Heart right ventricle (tissue), 16 donors: ENCODE measurements at regions of chr5 and their contacts with region 1.

Region 1: DNA sequence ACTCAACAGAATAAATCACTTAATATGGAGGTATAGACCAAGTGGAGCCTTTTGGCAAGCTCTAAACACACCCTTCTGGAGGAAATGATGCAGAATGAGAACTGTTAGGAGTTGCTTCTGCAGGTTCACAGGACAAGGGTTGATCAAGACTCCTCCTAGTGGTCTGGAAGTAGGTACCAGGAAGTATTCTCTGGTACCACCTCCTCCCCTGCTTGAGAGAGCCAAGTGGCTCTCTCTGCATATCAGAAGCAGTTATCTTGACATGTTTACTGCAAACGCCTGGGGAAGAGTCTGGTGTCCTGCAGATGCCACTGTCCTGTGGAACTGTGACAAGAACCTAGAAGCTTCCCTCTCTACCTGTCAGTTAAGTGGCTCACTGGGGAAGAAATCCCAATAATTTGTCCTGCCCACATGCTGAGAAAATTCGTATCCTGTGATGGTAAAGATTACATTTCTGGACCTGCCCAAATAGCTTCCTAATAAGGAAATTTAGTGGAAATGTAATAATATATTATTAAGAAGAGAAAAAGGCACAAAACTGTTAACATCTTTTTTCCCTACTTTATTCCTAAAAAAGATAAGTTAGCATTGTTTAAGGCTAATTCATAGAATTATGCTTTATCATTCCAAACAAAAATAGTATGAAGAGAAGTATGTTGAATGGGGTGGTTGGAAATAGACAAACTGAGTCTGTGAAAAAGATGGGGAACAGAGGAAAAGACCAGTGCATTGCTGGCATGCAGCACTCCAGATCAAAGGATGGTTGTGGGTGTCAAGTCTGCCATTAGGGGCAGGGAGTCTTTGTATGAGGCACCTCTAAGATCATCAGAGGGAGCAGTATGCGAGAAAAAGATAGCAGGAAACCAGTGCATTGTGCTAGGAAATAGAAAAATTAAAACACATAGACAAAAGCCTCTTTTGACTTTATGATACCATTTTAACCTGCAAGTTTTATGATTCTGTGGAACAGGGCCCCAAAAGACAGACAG is 118.8 kb downstream of the CDC42SE2 start:
- DNase-seq: no peak
- ATAC-seq: peak in 7 of 8 donors; percentile 34 to 70 (median 49)
- H3K4me3 ChIP-seq: no peak overlapping the region
- H3K27ac ChIP-seq: peak overlapping the region in 1 of 10 donors; percentile 92
- H3K4me1 ChIP-seq: peaks cover 0 to 86% (median 12%) of the 10 kb centered on the region in 9 donors
- H3K27me3 ChIP-seq: no peaks in the 10 kb centered on the region
- CTCF ChIP-seq: peak in 6 of 9 donors; percentile 30 to 60 (median 42)

Region 2: DNA sequence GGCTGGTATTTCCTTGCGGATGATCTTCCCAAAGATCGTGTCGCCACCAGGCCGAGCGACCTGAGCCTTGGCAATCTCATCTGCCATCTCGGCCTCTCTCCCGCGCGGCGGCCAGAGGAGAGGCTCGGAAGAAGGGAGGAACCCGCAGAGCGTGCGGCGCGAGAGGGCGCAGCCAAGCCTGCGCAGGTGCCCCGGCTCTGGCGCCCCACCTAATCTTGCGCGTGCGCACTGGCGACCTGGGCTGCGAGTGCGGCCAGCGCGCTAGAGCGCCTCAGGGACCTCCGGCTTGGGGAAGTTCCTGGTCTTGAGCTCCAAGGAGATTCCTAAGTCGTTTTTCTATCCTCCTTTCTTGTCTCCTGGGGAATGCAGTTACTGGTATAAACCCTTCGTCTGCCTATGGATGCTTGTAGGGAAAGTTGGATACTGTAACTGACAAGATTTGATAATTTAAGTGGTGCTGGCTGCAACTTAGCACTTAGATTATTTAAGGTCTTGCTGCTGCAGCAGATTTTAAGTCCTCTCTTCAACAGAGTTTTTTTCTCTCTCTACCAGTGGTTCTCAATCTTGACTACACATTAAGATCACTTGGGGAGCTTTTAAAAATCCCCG is 217.5 kb before region 1 on chr5 and contains the start of gene HINT1:
- intact Hi-C with region 1: loop called in 2 of 10 experiments (anchors 10 kb)
- DNase-seq: peak; percentile 89 to 94
- ATAC-seq: peak; percentile 95 to 99 (median 98)
- H3K4me3 ChIP-seq: peak within 1 kb of the TSS; percentile 73 to 95 (median 82)
- H3K27ac ChIP-seq: peak within 1 kb of the TSS; percentile 85 to 98 (median 92)
- H3K4me1 ChIP-seq: peaks cover 0 to 30% (median 21%) of the 10 kb centered on the region in 9 donors
- H3K27me3 ChIP-seq: no peaks in the 10 kb centered on the region
- CTCF ChIP-seq: peak in 3 of 9 donors; percentile 8 to 24 (median 15)
- total RNA-seq, gene HINT1: 113 to 190 (median 130) TPM

Region 3: DNA sequence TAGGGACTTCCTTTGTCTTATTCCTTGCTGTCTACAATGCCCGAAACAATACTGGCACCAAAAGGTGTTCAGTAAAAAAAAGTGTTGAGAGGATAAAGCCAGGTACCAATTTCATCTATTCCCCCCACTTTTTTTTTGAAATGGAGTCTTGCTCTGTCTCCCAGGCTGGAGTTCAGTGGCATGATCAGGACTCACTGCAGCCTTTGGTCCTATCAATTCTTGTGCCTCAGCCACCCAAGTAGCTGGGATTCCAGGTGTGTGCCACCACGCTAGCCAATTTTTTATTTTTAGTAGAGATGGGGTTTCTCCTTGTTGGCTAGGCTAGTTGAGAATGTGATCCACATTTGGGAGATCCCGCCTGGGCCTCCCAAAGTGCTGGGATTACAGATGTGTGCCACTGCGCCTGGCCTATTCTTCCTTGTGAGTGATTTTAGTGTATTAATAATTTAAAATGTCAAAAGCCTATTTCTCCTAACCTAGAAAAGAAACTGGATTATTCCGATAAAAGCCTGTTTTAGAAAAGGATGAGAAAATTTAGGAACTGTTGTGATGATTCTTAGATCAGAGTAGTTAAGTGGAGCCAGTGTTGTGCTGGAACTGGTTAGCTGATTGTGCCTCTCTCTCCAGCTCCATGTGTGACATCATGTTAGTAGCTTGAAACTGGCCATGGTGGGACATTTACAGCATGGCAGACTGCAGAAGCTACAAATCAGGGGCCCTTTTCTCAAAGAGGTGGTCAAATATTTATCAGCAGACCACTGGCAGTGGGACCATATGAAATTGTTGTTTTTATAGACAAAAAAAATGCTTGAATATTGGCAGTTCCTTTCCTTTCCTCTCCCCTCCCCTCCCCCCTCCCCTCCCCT is 104.6 kb before region 1 on chr5:
- intact Hi-C with region 1: loop called in 1 of 10 experiments (anchors 10 kb)
- DNase-seq: no peak
- ATAC-seq: no peak
- H3K4me3 ChIP-seq: no peak overlapping the region
- H3K27ac ChIP-seq: peak overlapping the region in 1 of 10 donors; percentile 29
- H3K4me1 ChIP-seq: peaks cover 0 to 81% (median 6%) of the 10 kb centered on the region in 9 donors
- H3K27me3 ChIP-seq: no peaks in the 10 kb centered on the region
- CTCF ChIP-seq: no peak

Region 4: GRCh38 chr5:131338051-131338453 is 44.6 kb before region 1 on chr5:
- intact Hi-C with region 1: no loop called
- DNase-seq: no peak
- ATAC-seq: no peak
- H3K4me3 ChIP-seq: no peak overlapping the region
- H3K27ac ChIP-seq: no peak overlapping the region
- H3K4me1 ChIP-seq: no peaks in the 10 kb centered on the region
- H3K27me3 ChIP-seq: no peaks in the 10 kb centered on the region
- CTCF ChIP-seq: no peak

Region 5: GRCh38 chr5:131394128-131394527 is 11.4 kb after region 1 on chr5:
- intact Hi-C with region 1: no loop called
- DNase-seq: no peak
- ATAC-seq: peak in 4 of 8 donors; percentile 38 to 63 (median 47)
- H3K4me3 ChIP-seq: no peak overlapping the region
- H3K27ac ChIP-seq: peak overlapping the region in 1 of 10 donors; percentile 52
- H3K4me1 ChIP-seq: peaks cover 0 to 15% (median 3%) of the 10 kb centered on the region in 9 donors
- H3K27me3 ChIP-seq: no peaks in the 10 kb centered on the region
- CTCF ChIP-seq: no peak